ENCODE measurements at regions of chr7 and their contacts with region 1.

Region 1: GRCh38 chr7:36487756-36488336 is 98.2 kb downstream of the ANLN start:
- DNase-seq: peak in 7 of 9 donors; percentile 47 to 72 (median 61)
- ATAC-seq: peak; percentile 78
- H3K4me3 ChIP-seq: no peak overlapping the region
- H3K4me3 Mint-ChIP-seq: no peak overlapping the region
- H3K27ac ChIP-seq: no peak overlapping the region
- H3K27ac Mint-ChIP-seq: peak overlapping the region in 1 of 9 donors; percentile 81
- H3K4me1 ChIP-seq: no peaks in the 10 kb centered on the region
- H3K4me1 Mint-ChIP-seq: peaks cover 0 to 9% (median 3%) of the 10 kb centered on the region in 7 donors
- H3K27me3 ChIP-seq: no peaks in the 10 kb centered on the region
- H3K27me3 Mint-ChIP-seq: peaks cover 0 to 22% (median 0%) of the 10 kb centered on the region in 5 donors

Region 2: GRCh38 chr7:36406156-36406555 is 81.7 kb before region 1 on chr7:
- CTCF ChIA-PET with region 1: no interaction called
- POLR2A ChIA-PET with region 1: no interaction called
- intact Hi-C with region 1: no loop called
- DNase-seq: no peak
- ATAC-seq: no peak
- H3K4me3 ChIP-seq: no peak overlapping the region
- H3K4me3 Mint-ChIP-seq: no peak overlapping the region
- H3K27ac ChIP-seq: no peak overlapping the region
- H3K27ac Mint-ChIP-seq: no peak overlapping the region
- H3K4me1 ChIP-seq: no peaks in the 10 kb centered on the region
- H3K4me1 Mint-ChIP-seq: peaks cover 0 to 22% (median 0%) of the 10 kb centered on the region in 7 donors
- H3K27me3 ChIP-seq: no peaks in the 10 kb centered on the region
- H3K27me3 Mint-ChIP-seq: no peaks in the 10 kb centered on the region

Region 3: DNA sequence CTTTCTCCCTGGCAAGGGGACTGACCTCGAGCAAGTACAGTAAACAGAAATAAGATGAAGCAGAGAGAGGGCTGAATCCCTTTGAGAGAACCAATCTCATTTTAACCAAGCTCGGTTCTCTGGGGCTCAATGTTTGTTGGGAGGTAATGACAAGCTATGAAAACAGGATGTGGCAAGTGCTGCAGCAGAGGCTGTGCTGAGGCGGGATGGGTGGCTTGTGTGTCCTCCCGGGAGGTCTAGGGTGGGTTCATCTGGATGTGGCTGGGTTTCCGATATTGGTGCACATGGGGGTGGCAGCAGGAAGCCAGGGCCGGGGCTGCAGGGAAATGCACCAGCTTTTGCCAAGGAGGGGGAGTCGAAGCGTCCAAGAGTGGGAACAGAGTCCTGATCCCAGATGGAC is 152.0 kb after region 1 on chr7:
- CTCF ChIA-PET with region 1: interaction called, 14 read pairs
- POLR2A ChIA-PET with region 1: interaction called, 6 read pairs
- intact Hi-C with region 1: no loop called
- DNase-seq: peak; percentile 14 to 81 (median 67)
- ATAC-seq: peak; percentile 88
- H3K4me3 ChIP-seq: peak overlapping the region; percentile 3
- H3K4me3 Mint-ChIP-seq: peak overlapping the region; percentile 54 to 83 (median 67)
- H3K27ac ChIP-seq: peak overlapping the region; percentile 67
- H3K27ac Mint-ChIP-seq: peak overlapping the region; percentile 85 to 99 (median 95)
- H3K4me1 ChIP-seq: peaks cover 46 to 70% of the 10 kb centered on the region in 2 donors
- H3K4me1 Mint-ChIP-seq: peaks cover 42 to 100% (median 95%) of the 10 kb centered on the region in 7 donors
- H3K27me3 ChIP-seq: no peaks in the 10 kb centered on the region
- H3K27me3 Mint-ChIP-seq: no peaks in the 10 kb centered on the region

Region 4: GRCh38 chr7:36677769-36678437 is 190.1 kb after region 1 on chr7:
- CTCF ChIA-PET with region 1: interaction called, 15 read pairs
- POLR2A ChIA-PET with region 1: interaction called, 3 read pairs
- intact Hi-C with region 1: loop called in 1 of 2 experiments (anchors 2 kb)
- DNase-seq: peak in 5 of 9 donors; percentile 5 to 68 (median 25)
- ATAC-seq: peak; percentile 19
- H3K4me3 ChIP-seq: peak overlapping the region; percentile 5
- H3K4me3 Mint-ChIP-seq: peak overlapping the region; percentile 46 to 84 (median 67)
- H3K27ac ChIP-seq: peak overlapping the region; percentile 55
- H3K27ac Mint-ChIP-seq: peak overlapping the region; percentile 83 to 98 (median 89)
- H3K4me1 ChIP-seq: peaks cover 14 to 29% of the 10 kb centered on the region in 2 donors
- H3K4me1 Mint-ChIP-seq: peaks cover 12 to 72% (median 57%) of the 10 kb centered on the region in 7 donors
- H3K27me3 ChIP-seq: no peaks in the 10 kb centered on the region
- H3K27me3 Mint-ChIP-seq: no peaks in the 10 kb centered on the region

Region 5: DNA sequence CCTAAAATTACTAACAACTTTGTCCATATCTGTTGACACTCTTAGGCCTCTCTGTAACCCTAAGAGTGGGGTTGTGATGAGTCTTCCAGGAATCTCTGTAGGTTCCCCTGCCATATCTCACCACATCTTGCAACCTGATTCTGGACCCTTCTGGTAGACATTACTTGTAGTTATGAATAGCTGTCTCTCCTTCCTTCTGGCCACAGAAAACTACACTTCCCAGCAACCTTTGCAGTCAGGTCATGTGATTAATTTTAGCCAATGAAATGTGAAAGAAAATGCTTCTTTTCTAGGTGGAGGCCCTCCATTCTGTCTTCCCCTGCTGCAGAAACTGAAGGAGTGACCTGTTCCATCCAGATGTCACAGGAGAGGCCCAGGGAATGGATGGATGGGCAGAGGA is 384.0 kb after region 1 on chr7:
- CTCF ChIA-PET with region 1: interaction called, 3 read pairs
- POLR2A ChIA-PET with region 1: no interaction called
- intact Hi-C with region 1: loop called in 1 of 2 experiments (anchors 10 kb)
- DNase-seq: peak in 5 of 9 donors; percentile 12 to 27 (median 19)
- ATAC-seq: no peak
- H3K4me3 ChIP-seq: no peak overlapping the region
- H3K4me3 Mint-ChIP-seq: peak overlapping the region in 1 of 10 donors; percentile 18
- H3K27ac ChIP-seq: no peak overlapping the region
- H3K27ac Mint-ChIP-seq: peak overlapping the region in 7 of 9 donors; percentile 6 to 72 (median 44)
- H3K4me1 ChIP-seq: peaks cover 0 to 6% of the 10 kb centered on the region in 2 donors
- H3K4me1 Mint-ChIP-seq: peaks cover 0 to 33% (median 6%) of the 10 kb centered on the region in 7 donors
- H3K27me3 ChIP-seq: no peaks in the 10 kb centered on the region
- H3K27me3 Mint-ChIP-seq: no peaks in the 10 kb centered on the region

Region 6: GRCh38 chr7:37201003-37201875 is 713.4 kb after region 1 on chr7:
- CTCF ChIA-PET with region 1: interaction called, 12 read pairs
- POLR2A ChIA-PET with region 1: no interaction called
- intact Hi-C with region 1: loop called (anchors 1 kb)
- DNase-seq: peak in 5 of 9 donors; percentile 10 to 44 (median 18)
- ATAC-seq: peak; percentile 64
- H3K4me3 ChIP-seq: no peak overlapping the region
- H3K4me3 Mint-ChIP-seq: no peak overlapping the region
- H3K27ac ChIP-seq: no peak overlapping the region
- H3K27ac Mint-ChIP-seq: peak overlapping the region in 5 of 9 donors; percentile 18 to 74 (median 28)
- H3K4me1 ChIP-seq: no peaks in the 10 kb centered on the region
- H3K4me1 Mint-ChIP-seq: peaks cover 0 to 19% (median 11%) of the 10 kb centered on the region in 7 donors
- H3K27me3 ChIP-seq: no peaks in the 10 kb centered on the region
- H3K27me3 Mint-ChIP-seq: no peaks in the 10 kb centered on the region

Measured in naive thymus-derived CD4-positive, alpha-beta T cell (primary cell).